WTC11 (cell line): ENCODE measurements at regions of chr4 and their contacts with region 1.

Region 1: DNA sequence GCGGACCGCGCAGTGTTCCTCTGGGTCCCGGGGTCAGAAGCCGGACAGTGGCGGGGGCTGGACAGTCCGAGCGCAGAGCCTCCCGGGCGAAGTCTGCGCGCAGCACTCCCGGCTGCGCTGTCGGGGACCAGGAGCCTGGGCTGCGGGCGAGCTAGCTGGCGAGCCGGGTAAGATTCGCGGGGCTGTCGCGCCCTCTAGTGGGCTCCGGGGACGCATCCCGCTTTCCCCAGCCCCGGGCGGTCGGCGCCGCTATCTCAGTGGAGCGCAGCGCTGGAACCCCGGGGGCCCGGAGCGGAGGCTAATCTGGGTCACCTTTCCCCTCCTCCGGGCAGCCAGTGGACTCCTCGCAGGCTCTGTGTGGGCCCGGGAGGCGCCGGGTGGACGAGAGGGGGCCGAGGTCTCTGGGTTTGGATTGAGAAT is 4.2 kb downstream of the PDGFRA start:
- DNase-seq: peak; percentile 84
- ATAC-seq: peak; percentile 57
- H3K4me3 Mint-ChIP-seq: peak overlapping the region; percentile 82
- H3K27ac Mint-ChIP-seq: no peak overlapping the region
- H3K4me1 Mint-ChIP-seq: peaks cover 32% of the 10 kb centered on the region
- H3K27me3 Mint-ChIP-seq: peaks cover 76% of the 10 kb centered on the region
- CTCF ChIP-seq: peak; percentile 7; the same call in 1 of the 2 replicates

Region 2: DNA sequence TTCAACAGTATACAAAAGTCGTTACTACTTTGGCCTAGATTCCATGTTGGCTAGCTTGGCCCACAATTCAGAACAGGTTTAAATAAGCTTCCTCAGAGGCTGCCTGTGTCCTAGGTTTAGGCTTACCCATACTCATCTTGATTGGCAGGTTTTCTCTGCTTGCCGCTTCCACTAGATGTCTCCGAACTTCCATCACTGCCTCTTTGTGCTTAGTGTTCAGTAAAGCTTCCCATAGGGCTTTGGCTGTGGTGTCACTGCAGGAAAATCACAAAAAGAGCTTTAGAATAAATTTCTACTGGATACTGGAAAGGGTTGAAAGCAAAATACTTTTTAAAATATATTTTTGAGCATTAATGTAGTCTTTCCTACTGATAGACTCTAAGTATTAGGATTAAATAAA is 919.8 kb before region 1 on chr4:
- CTCF ChIA-PET with region 1: interaction called, 12 read pairs
- POLR2A ChIA-PET with region 1: no interaction called
- DNase-seq: no peak
- ATAC-seq: peak; percentile 97
- H3K4me3 Mint-ChIP-seq: no peak overlapping the region
- H3K27ac Mint-ChIP-seq: no peak overlapping the region
- H3K4me1 Mint-ChIP-seq: peaks cover 15% of the 10 kb centered on the region
- H3K27me3 Mint-ChIP-seq: no peaks in the 10 kb centered on the region
- CTCF ChIP-seq: no peak

Region 3: DNA sequence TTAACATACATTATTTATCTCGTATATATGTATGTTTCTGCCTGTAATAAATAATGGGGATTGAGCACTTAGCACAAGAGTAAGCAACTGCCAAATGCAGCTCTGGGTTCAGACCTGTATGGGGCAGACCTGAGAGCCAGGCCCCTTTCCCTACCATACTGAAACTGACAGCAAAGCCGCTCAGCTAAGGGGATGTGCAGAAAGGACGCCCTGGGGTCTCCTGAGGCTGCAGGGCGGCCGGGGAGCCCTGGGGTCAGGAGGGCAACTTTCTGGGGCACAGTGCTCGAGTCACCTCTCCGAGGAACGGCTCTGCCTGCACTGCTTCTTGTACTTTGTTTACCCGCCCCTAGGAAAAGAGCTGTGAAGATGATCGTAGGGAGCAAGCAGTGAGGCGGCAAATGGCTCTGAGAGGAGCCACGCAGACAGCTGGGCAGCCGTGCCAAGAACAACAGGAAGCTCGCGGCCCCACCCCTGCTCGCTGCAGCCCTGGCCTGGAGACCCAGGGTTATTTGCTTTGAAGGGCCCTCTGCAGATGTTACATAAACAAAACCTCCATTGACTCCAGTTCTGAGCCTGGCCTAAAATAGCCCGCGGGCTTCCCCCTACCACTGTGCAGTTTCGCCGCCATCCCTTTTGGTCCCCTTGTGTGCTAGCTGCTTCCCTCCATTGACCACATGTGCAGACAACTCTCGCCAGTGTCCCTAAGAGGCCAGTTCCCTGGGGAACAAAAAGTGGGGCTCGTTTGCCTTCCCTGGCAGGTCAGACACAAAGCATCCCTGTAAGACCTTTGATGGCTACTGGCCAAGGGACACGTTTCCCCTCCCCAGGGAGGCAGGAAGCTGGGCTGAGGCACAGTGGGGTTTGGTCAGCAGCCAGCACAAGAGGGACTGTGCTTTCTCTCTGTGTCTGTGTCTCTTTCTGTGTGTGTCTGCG is 530.7 kb before region 1 on chr4:
- CTCF ChIA-PET with region 1: interaction called, 76 read pairs
- POLR2A ChIA-PET with region 1: no interaction called
- DNase-seq: peak; percentile 20
- ATAC-seq: peak; percentile 87
- H3K4me3 Mint-ChIP-seq: no peak overlapping the region
- H3K27ac Mint-ChIP-seq: no peak overlapping the region
- H3K4me1 Mint-ChIP-seq: peaks cover 17% of the 10 kb centered on the region
- H3K27me3 Mint-ChIP-seq: no peaks in the 10 kb centered on the region
- CTCF ChIP-seq: no peak

Region 4: GRCh38 chr4:53908661-53909078 is 324.6 kb before region 1 on chr4:
- CTCF ChIA-PET with region 1: interaction called, 111 read pairs
- POLR2A ChIA-PET with region 1: no interaction called
- DNase-seq: no peak
- ATAC-seq: peak; percentile 74
- H3K4me3 Mint-ChIP-seq: no peak overlapping the region
- H3K27ac Mint-ChIP-seq: no peak overlapping the region
- H3K4me1 Mint-ChIP-seq: peaks cover 20% of the 10 kb centered on the region
- H3K27me3 Mint-ChIP-seq: peaks cover 27% of the 10 kb centered on the region
- CTCF ChIP-seq: peak; percentile 47; the same call in 1 of the 2 replicates

Region 5: GRCh38 chr4:54099748-54100574 is 133.3 kb before region 1 on chr4 and contains the start of gene GSX2:
- CTCF ChIA-PET with region 1: interaction called, 20 read pairs
- POLR2A ChIA-PET with region 1: interaction called, 3 read pairs
- DNase-seq: peak; percentile 40
- ATAC-seq: peak; percentile 4
- H3K4me3 Mint-ChIP-seq: peak within 1 kb of the TSS; percentile 68
- H3K27ac Mint-ChIP-seq: no peak within 1 kb of the TSS
- H3K4me1 Mint-ChIP-seq: peaks cover 81% of the 10 kb centered on the region
- H3K27me3 Mint-ChIP-seq: peaks cover 100% of the 10 kb centered on the region
- CTCF ChIP-seq: no peak
- total RNA-seq, gene GSX2: not detected in 3 replicates

Region 6: GRCh38 chr4:54277691-54278090 is 44.4 kb after region 1 on chr4:
- CTCF ChIA-PET with region 1: interaction called, 45 read pairs
- POLR2A ChIA-PET with region 1: no interaction called
- DNase-seq: no peak
- ATAC-seq: no peak
- H3K4me3 Mint-ChIP-seq: peak overlapping the region; percentile 57
- H3K27ac Mint-ChIP-seq: no peak overlapping the region
- H3K4me1 Mint-ChIP-seq: peaks cover 42% of the 10 kb centered on the region
- H3K27me3 Mint-ChIP-seq: peaks cover 13% of the 10 kb centered on the region
- CTCF ChIP-seq: no peak